PC-3 (cell line): ENCODE measurements at regions of chr6 and their contacts with region 1.

Region 1: DNA sequence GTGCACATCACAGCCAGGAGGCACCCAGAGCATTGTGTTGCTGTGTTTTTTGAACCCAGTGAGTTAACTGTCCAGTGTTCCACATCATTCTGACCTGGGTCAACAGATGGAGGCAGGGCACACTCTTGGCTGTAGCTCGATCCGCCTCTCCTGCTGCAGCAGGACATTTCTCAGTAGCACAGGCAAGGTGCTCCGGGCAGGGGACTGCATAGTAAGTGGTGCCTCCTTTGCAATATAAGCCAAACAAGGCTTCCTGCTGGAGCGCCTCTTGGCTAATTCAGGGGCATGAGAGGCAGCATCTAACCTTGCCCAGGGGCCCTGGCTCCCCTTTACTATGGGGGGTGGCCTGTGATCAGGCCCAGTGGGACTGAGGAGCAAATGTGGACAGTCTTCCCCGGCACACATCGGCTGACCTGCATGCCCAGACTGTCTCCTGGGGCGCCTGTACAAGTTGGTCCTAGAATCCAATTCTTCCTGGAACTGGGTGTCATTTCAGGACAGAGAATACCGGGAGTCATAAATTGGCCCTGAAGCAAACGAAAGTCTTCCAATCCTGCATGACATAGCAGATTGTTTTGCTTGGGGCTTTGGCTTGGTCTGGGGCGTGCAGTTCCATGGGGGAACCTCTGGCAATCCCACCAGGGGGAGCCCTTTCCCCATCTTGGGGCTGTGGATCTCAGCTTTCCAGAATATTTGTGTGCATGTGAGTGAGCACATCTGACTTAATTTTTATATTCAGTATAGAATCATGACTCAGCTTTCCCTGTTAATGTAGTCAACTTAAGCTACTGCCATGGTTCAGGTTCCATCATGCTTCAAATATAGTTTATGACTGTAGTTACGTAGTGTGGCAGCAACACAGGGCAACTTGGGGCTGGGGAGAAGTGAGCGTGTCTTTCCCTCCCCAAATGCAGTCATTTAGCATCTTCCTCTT is 56.0 kb upstream of the DDR1 start:
- DNase-seq: peak; percentile 94
- ATAC-seq: peak; percentile 91
- H3K4me3 ChIP-seq: no peak overlapping the region
- H3K27ac ChIP-seq: peak overlapping the region; percentile 80
- H3K4me1 ChIP-seq: peaks cover 36% of the 10 kb centered on the region
- H3K27me3 ChIP-seq: no peaks in the 10 kb centered on the region
- CTCF ChIP-seq: peak; percentile 95

Region 2: DNA sequence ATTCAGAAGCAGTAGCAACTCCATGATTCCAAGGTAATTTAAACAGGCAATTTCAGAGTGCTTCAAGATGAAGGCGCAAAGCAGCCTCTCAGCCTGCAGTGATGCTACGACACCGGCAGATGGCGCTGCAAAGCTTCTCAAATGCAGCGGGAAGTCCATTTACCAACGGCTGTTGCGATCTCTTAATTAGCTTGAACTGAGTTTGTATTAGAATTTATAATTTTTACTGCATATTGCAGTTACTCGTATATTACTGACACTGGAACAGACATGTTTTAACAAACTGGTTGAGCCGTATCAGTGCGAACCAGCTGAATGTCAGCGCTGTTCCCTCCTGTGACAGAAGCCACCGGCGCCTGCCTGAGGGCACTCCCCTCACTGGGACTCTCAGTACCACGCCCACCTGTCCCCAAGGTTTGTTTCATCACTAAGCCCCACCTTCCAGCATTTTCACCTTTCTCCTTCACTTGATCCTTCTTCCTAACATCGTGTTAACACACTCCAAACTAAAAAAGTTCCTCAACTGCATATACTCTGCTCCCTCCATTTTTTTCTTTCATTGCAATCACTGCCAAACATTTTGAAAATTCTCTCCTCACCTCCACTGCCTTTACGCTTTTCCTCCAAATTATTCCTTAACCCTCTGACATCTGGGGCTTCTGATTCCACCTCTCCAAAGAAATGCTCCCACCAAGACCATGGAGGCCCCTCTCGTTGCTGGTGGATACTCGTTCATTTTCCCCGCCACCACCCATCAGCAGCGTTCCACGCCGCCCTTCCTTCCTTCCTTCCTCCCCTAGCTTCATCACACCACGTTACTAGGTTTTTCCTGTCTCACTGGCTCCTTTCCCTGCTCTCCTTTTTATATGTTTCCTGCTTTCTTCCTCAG is 286.5 kb before region 1 on chr6:
- CTCF ChIA-PET with region 1: no interaction called
- POLR2A ChIA-PET with region 1: no interaction called
- intact Hi-C with region 1: no loop called
- DNase-seq: peak; percentile 95
- ATAC-seq: peak; percentile 65
- H3K4me3 ChIP-seq: peak overlapping the region; percentile 68
- H3K27ac ChIP-seq: no peak overlapping the region
- H3K4me1 ChIP-seq: peaks cover 18% of the 10 kb centered on the region; the same call in 1 of the 2 replicates
- H3K27me3 ChIP-seq: no peaks in the 10 kb centered on the region
- CTCF ChIP-seq: peak; percentile 98

Region 3: DNA sequence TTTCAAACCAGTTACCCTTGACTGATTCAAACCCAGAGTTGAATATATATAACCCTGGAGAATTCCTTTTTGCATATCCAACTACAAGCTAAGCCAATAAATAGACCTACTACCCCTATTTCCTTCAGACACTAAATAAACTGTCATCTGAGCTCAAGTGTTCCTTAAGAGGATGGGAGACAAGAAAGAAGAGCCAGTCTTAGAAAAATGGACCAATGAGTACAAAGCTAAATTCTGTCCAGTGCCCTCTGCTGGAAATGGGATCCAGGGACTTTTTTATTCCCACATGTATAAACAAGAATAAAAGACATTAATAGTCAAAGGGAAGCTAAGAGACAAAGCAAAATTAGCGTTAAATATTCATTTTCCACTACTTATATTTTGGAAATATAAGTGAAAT is 216.1 kb before region 1 on chr6:
- CTCF ChIA-PET with region 1: no interaction called
- POLR2A ChIA-PET with region 1: no interaction called
- intact Hi-C with region 1: no loop called
- DNase-seq: peak; percentile 45
- ATAC-seq: 0 out of 2 replicates have a peak, but pooled peaks have one; percentile 5
- H3K4me3 ChIP-seq: no peak overlapping the region
- H3K27ac ChIP-seq: no peak overlapping the region
- H3K4me1 ChIP-seq: peaks cover 30% of the 10 kb centered on the region
- H3K27me3 ChIP-seq: no peaks in the 10 kb centered on the region
- CTCF ChIP-seq: peak; percentile 68

Region 4: GRCh38 chr6:30656513-30656912 is 171.8 kb before region 1 on chr6:
- CTCF ChIA-PET with region 1: no interaction called
- POLR2A ChIA-PET with region 1: no interaction called
- intact Hi-C with region 1: no loop called
- DNase-seq: no peak
- ATAC-seq: no peak
- H3K4me3 ChIP-seq: no peak overlapping the region
- H3K27ac ChIP-seq: no peak overlapping the region
- H3K4me1 ChIP-seq: no peaks in the 10 kb centered on the region
- H3K27me3 ChIP-seq: no peaks in the 10 kb centered on the region
- CTCF ChIP-seq: no peak

Region 5: GRCh38 chr6:30730601-30731435 is 97.5 kb before region 1 on chr6:
- CTCF ChIA-PET with region 1: no interaction called
- POLR2A ChIA-PET with region 1: interaction called, 28 read pairs
- intact Hi-C with region 1: no loop called
- DNase-seq: peak; percentile 84
- ATAC-seq: peak; percentile 76
- H3K4me3 ChIP-seq: peak overlapping the region; percentile 25; the same call in 1 of the 2 replicates
- H3K27ac ChIP-seq: peak overlapping the region; percentile 40
- H3K4me1 ChIP-seq: peaks cover 10% of the 10 kb centered on the region; the same call in 1 of the 2 replicates
- H3K27me3 ChIP-seq: no peaks in the 10 kb centered on the region
- CTCF ChIP-seq: peak; percentile 84

Region 6: DNA sequence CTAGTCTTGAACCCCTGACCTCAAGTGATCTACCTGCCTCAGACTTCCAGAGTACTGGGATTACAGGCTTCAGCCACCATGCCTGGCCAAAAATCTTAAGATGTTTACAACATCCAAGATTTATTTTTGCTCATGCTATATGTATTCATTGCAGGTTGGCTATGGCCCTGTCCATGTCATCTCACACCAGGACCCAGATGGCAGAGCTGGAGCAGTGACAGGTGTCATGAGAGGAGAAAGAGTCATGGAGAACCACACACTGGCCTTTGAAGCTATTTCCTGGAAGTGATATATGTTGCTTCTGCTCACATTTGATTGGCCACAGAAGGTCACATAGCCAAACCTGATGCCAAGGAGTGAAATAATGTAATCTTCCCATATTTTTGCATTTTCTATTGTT is 42.3 kb after region 1 on chr6:
- CTCF ChIA-PET with region 1: no interaction called
- POLR2A ChIA-PET with region 1: no interaction called
- intact Hi-C with region 1: no loop called
- DNase-seq: no peak
- ATAC-seq: no peak
- H3K4me3 ChIP-seq: no peak overlapping the region
- H3K27ac ChIP-seq: no peak overlapping the region
- H3K4me1 ChIP-seq: peaks cover under 1% of the 10 kb centered on the region; the same call in 1 of the 2 replicates
- H3K27me3 ChIP-seq: no peaks in the 10 kb centered on the region
- CTCF ChIP-seq: no peak

Region 7: GRCh38 chr6:30914076-30914853 is 86.0 kb after region 1 on chr6 and contains the start of gene VARS2:
- CTCF ChIA-PET with region 1: interaction called, 12 read pairs
- POLR2A ChIA-PET with region 1: no interaction called
- intact Hi-C with region 1: loop called (anchors 1 kb)
- DNase-seq: peak; percentile 97
- ATAC-seq: peak; percentile 87
- H3K4me3 ChIP-seq: peak within 1 kb of the TSS; percentile 67
- H3K27ac ChIP-seq: peak within 1 kb of the TSS; percentile 51
- H3K4me1 ChIP-seq: peaks cover 28% of the 10 kb centered on the region
- H3K27me3 ChIP-seq: no peaks in the 10 kb centered on the region
- CTCF ChIP-seq: peak; percentile 50
- total RNA-seq, gene VARS2: 66.5 and 87.8 TPM in 2 replicates